ENCODE measurements at regions of chr3 and their contacts with region 1.

Region 1: DNA sequence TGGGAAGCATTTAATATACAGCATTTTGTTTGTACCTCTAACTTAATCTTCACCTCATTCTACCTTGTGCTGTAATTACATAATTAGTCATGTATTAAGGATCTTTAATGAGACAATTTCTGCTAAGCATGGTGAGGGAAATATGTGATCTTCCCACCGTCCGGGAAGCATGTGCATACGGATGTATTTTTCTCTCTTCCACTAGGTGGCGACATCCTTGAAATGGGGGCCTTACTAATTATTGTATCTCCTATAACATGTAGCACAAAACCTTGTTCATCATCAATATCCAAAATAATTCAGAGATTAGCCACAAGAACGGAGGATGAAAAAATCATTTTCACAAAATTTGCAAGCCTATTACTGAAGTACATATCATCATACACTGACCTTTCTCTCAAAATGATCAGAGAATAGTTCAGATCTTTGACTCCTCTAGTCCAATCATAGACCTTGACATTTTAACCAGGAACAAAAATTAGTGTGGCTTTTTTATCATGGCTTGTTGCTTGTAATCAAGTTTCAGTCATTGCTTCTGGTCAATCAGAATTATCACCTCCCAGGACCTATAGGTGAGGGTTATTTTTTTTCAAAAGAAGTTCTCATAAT is 148.9 kb upstream of the GBE1 start:
- DNase-seq: peak; percentile 8
- CTCF ChIP-seq: peak; percentile 53

Region 2: DNA sequence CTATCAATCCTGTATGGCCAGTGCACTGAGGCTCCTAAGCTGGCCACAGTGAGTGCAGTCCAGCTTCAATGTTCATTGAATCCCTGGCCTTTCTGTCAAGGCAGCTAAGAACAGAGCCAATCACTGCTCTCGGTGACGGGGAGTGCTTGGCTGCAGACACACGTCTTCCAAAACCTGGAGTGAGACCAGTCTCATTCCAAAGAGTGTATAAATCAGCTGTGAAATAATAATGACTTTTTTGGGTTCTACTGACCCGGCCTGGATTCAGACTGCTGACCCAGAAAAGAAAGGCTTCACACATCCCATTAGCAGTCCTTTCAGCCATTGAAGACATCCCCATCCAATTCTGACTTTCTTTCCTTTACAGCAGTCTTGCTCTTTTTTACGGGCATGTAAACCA is 814.4 kb before region 1 on chr3:
- CTCF ChIA-PET with region 1: no interaction called
- POLR2A ChIA-PET with region 1: no interaction called
- DNase-seq: no peak
- CTCF ChIP-seq: no peak

Region 3: GRCh38 chr3:81581966-81582599 is 328.3 kb before region 1 on chr3:
- CTCF ChIA-PET with region 1: no interaction called
- POLR2A ChIA-PET with region 1: no interaction called
- DNase-seq: peak; percentile 5
- CTCF ChIP-seq: peak; percentile 75

Region 4: GRCh38 chr3:81707996-81708395 is 202.4 kb before region 1 on chr3:
- CTCF ChIA-PET with region 1: no interaction called
- POLR2A ChIA-PET with region 1: no interaction called
- DNase-seq: no peak
- CTCF ChIP-seq: no peak

Region 5: DNA sequence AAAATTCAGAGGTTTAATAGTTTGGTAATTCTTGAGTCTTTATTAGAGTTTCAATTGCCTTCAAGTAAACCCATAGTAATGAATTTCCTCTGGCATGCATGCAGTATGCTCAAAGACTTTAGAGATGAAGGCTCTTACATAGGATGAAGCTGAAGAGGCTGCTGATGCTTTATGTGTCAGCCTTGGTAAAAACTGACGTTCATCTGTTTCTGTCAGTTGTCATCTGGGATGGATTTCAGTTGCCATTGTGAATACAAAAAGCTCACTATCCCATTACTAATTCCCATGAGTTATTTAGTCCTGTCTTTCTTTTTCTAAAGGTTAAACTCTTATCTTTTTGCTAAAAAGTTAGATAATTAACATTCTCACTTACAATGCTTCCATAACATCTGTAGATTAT is 12.0 kb before region 1 on chr3:
- CTCF ChIA-PET with region 1: interaction called, 13 read pairs
- POLR2A ChIA-PET with region 1: no interaction called
- DNase-seq: no peak
- CTCF ChIP-seq: no peak

Region 6: DNA sequence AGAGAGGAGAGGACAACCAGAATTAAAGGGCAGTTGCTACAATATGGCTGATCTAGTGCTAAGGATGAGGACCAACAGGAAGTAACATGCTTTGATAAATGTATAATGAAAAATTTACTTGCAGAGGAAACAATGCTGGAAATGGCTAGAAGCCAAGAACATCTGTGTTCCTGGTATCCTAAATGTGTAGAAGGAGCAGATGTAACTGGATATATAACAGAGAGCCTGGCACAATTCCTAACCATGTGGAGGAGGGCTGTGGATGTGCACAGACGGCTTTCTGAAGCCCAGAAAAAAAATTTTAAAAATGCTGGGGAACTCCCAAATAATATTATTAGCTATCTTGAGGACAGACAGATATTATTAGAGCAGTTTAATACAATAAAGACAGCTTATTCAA is 10.5 kb after region 1 on chr3:
- CTCF ChIA-PET with region 1: interaction called, 53 read pairs
- POLR2A ChIA-PET with region 1: no interaction called
- DNase-seq: no peak
- CTCF ChIP-seq: no peak

Region 7: DNA sequence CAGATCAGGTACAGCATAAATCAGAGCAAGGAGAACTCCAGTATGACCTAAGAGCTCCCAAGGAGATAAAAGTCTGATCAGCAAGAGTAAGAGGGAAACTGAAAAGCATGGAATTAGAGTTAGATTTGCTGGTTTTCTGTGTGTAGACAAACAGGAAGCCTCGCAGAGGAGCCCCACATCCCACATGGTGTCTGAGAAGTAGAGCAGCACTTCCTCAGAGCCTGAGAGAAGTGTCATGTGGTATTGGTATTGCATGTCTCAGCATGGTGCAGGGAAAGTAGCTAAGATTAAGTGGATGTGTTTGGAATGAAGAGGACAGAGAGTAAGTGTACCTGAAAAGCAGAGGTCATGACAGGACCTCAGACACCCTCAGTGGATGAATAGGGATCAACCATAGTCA is 26.5 kb after region 1 on chr3:
- CTCF ChIA-PET with region 1: interaction called, 11 read pairs
- POLR2A ChIA-PET with region 1: no interaction called
- DNase-seq: no peak
- CTCF ChIP-seq: no peak